ENCODE measurements at regions of chr2 and their contacts with region 1.

Region 1: DNA sequence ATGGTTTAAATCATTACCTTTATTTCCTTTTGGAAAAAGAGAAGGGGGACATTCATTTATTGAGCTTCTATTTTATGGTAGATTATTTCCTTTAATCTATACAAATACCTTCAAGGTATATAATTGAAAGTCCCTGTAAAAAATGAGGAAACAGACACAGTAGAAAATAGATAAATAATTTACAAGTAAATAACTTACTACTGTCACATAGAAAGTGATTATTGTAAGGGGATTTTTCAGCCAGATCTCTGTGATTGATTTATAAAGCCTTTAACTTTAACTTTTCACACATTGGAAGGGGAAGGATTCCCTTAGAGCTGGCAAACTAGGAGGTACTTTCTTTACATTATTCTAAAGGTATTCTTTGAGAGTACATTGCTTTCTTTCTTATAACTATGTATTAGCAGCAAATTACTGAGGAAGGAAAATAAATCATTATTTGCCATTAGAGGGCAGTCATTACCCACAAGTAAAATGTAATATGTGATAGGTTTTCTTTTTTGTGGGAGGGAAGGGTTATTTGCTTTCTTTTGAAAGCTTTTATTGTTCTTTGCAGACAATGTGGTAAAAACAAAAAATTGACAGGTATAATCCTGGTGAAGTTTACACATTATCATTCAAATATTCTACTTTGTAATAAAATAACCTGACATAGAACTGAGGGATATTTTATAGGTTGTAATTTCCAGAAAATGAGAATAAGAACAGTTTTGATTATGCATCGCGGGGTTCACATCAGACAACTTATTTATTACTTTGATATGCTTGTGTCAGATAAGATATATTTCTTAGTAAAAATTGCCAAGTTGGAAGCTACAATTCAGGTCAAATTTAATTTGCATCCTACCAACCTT is 24.8 kb upstream of the RPE start:
- DNase-seq: no peak
- ATAC-seq: no peak
- H3K4me3 ChIP-seq: no peak overlapping the region
- H3K4me1 ChIP-seq: no peaks in the 10 kb centered on the region
- CTCF ChIP-seq: no peak

Region 2: GRCh38 chr2:210195101-210195852 is 217.7 kb after region 1 on chr2:
- intact Hi-C with region 1: loop called (anchors 5 kb)
- DNase-seq: peak in 1 of 3 donors; percentile 27
- ATAC-seq: peak; percentile 44
- H3K4me3 ChIP-seq: no peak overlapping the region
- H3K4me1 ChIP-seq: no peaks in the 10 kb centered on the region
- CTCF ChIP-seq: peak; percentile 29

Measured in mucosa of descending colon (tissue), 3 donors.